Activated CD4-positive, alpha-beta memory T cell treated with anti-CD3 and anti-CD28 coated beads, Interleukin-2, amount 10 ng/mL, durations not matched to agents 7 days and 5 days (primary cell): ENCODE measurements at regions of chr1 and their contacts with region 1.

Region 1: DNA sequence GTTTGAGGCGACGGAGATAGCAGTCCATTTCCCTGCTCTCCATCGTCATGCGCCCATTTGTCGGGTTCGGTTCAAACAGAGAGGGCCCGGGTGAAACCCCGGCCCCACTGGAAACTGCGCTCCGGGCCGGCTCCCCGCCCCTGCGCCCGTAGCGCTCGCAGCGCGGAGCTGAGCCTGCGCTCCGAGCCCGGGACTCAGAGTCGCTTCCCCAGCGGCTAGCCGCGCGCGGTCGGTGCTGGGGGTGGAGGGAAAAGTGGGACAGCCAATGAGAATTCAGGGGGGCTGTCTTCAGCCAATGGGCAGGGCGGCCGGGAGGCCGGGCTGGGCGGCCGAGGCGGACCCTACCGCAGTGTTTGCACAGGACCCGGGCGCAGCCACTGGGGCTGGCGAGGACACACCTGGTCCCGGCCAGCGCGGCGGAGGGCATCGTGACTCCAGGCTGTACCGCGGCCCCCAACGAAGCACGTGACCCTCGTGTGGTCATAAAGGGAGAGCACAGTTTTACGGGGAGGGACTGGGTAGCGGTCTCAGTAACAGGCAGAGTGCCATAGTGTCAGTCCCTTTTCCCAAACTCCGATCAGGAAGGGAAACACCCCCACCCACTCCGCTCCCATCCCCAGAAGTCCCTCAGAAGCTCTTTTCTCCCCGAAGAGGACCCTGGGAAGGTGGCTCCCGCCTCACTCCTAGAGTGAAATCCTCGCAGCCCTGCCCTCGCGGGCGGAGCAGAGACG is at the start of gene INKA2:
- DNase-seq: peak; percentile 86
- H3K4me3 Mint-ChIP-seq: peak within 1 kb of the TSS; percentile 84
- H3K27ac Mint-ChIP-seq: peak within 1 kb of the TSS; percentile 52
- H3K4me1 Mint-ChIP-seq: peaks cover 23% of the 10 kb centered on the region
- H3K27me3 Mint-ChIP-seq: peaks cover 47% of the 10 kb centered on the region
- total RNA-seq, gene INKA2: 2.4 to 2.8 TPM

Region 2: GRCh38 chr1:111600886-111601386 is 138.4 kb before region 1 on chr1:
- CTCF ChIA-PET with region 1: no interaction called
- POLR2A ChIA-PET with region 1: no interaction called
- DNase-seq: no peak
- H3K4me3 Mint-ChIP-seq: peak overlapping the region; percentile 29
- H3K27ac Mint-ChIP-seq: peak overlapping the region; percentile 98
- H3K4me1 Mint-ChIP-seq: peaks cover 99% of the 10 kb centered on the region
- H3K27me3 Mint-ChIP-seq: no peaks in the 10 kb centered on the region

Region 3: GRCh38 chr1:111725192-111725591 is 14.2 kb before region 1 on chr1:
- CTCF ChIA-PET with region 1: interaction called, 4 read pairs
- POLR2A ChIA-PET with region 1: interaction called, 32 read pairs
- DNase-seq: no peak
- H3K4me3 Mint-ChIP-seq: no peak overlapping the region
- H3K27ac Mint-ChIP-seq: no peak overlapping the region
- H3K4me1 Mint-ChIP-seq: peaks cover 14% of the 10 kb centered on the region
- H3K27me3 Mint-ChIP-seq: no peaks in the 10 kb centered on the region

Region 4: DNA sequence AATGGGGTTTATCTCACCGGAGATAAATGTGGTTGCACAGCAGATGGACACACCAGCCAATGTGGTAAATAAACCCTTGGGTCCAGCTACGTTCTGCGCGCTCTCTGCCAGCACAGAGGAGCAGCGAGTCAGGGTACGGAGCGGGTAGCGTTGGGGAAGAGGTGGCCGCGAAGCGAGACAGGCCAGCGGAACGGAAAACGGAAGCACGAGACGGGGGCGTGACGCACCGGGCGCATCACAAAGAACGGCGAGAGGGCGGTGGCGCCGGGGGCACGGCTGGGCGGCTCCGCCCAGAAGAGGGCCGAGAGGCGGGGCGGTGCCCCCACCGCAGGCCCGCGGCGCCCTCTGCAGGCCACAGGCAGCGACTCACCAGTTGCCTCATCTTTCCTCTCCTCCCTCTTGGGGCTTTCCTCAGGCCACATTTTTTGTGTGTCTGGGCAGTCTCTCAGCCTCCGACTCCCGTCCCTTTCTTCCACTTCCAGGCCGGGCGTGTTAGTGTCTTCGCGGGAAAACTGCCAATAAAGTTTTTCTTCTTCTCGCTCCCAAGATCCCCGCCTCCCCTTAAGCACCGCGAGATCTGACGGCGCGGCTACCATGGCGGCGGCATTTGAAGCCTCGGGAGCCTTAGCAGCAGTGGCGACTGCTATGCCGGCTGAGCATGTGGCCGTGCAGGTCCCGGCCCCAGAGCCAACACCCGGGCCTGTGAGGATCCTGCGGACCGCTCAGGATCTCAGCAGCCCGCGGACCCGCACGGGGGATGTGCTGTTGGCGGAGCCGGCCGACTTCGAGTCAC is 16.2 kb after region 1 on chr1 and contains the start of gene DDX20:
- CTCF ChIA-PET with region 1: interaction called, 7 read pairs
- POLR2A ChIA-PET with region 1: interaction called, 48 read pairs
- DNase-seq: peak; percentile 94
- H3K4me3 Mint-ChIP-seq: peak within 1 kb of the TSS; percentile 93
- H3K27ac Mint-ChIP-seq: peak within 1 kb of the TSS; percentile 96
- H3K4me1 Mint-ChIP-seq: peaks cover 48% of the 10 kb centered on the region
- H3K27me3 Mint-ChIP-seq: peaks cover 4% of the 10 kb centered on the region
- total RNA-seq, gene DDX20: 11.2 to 11.8 TPM